CD8-positive, alpha-beta T cell (primary cell): ENCODE measurements at regions of chr5 and their contacts with region 1.

Region 1: GRCh38 chr5:75511435-75512384 is at the starts of genes CERT1 and POLK:
- DNase-seq: peak; percentile 78 to 97 (median 89)
- ATAC-seq: peak; percentile 87
- H3K4me3 ChIP-seq: peak within 1 kb of the TSS; percentile 72 to 79
- H3K4me3 Mint-ChIP-seq: peak within 1 kb of the TSS; percentile 96
- H3K27ac ChIP-seq: peak within 1 kb of the TSS; percentile 74 to 78
- H3K27ac Mint-ChIP-seq: peak within 1 kb of the TSS; percentile 97
- H3K4me1 ChIP-seq: peaks cover 29% of the 10 kb centered on the region
- H3K4me1 Mint-ChIP-seq: peaks cover 64% of the 10 kb centered on the region
- H3K27me3 ChIP-seq: no peaks in the 10 kb centered on the region
- H3K27me3 Mint-ChIP-seq: no peaks in the 10 kb centered on the region
- CTCF ChIP-seq: no peak
- total RNA-seq, gene CERT1: 29.2 to 36.4 TPM
- total RNA-seq, gene POLK: 6.9 to 10.0 TPM

Region 2: GRCh38 chr5:74865804-74866595 is 645.7 kb before region 1 on chr5 and contains the start of gene FAM169A:
- CTCF ChIA-PET with region 1: no interaction called
- POLR2A ChIA-PET with region 1: no interaction called
- intact Hi-C with region 1: loop called in 1 of 2 experiments (anchors 10 kb)
- DNase-seq: peak; percentile 22 to 81 (median 56)
- ATAC-seq: peak; percentile 74
- H3K4me3 ChIP-seq: peak within 1 kb of the TSS; percentile 78 to 86
- H3K4me3 Mint-ChIP-seq: peak within 1 kb of the TSS; percentile 94
- H3K27ac ChIP-seq: peak within 1 kb of the TSS; percentile 58 to 71
- H3K27ac Mint-ChIP-seq: peak within 1 kb of the TSS; percentile 92
- H3K4me1 ChIP-seq: peaks cover 24% of the 10 kb centered on the region
- H3K4me1 Mint-ChIP-seq: peaks cover 40% of the 10 kb centered on the region
- H3K27me3 ChIP-seq: no peaks in the 10 kb centered on the region
- H3K27me3 Mint-ChIP-seq: no peaks in the 10 kb centered on the region
- CTCF ChIP-seq: no peak
- total RNA-seq, gene FAM169A: 21.0 to 21.6 TPM

Region 3: GRCh38 chr5:75681125-75681830 is 169.6 kb after region 1 on chr5:
- CTCF ChIA-PET with region 1: no interaction called
- POLR2A ChIA-PET with region 1: no interaction called
- intact Hi-C with region 1: loop called in 1 of 2 experiments (anchors 10 kb)
- DNase-seq: peak in 2 of 9 experiments; percentile 45 to 61
- ATAC-seq: peak; percentile 49
- H3K4me3 ChIP-seq: no peak overlapping the region
- H3K4me3 Mint-ChIP-seq: no peak overlapping the region
- H3K27ac ChIP-seq: no peak overlapping the region
- H3K27ac Mint-ChIP-seq: no peak overlapping the region
- H3K4me1 ChIP-seq: peaks cover 10% of the 10 kb centered on the region
- H3K4me1 Mint-ChIP-seq: peaks cover 8% of the 10 kb centered on the region
- H3K27me3 ChIP-seq: no peaks in the 10 kb centered on the region
- H3K27me3 Mint-ChIP-seq: no peaks in the 10 kb centered on the region
- CTCF ChIP-seq: peak; percentile 90

Region 4: DNA sequence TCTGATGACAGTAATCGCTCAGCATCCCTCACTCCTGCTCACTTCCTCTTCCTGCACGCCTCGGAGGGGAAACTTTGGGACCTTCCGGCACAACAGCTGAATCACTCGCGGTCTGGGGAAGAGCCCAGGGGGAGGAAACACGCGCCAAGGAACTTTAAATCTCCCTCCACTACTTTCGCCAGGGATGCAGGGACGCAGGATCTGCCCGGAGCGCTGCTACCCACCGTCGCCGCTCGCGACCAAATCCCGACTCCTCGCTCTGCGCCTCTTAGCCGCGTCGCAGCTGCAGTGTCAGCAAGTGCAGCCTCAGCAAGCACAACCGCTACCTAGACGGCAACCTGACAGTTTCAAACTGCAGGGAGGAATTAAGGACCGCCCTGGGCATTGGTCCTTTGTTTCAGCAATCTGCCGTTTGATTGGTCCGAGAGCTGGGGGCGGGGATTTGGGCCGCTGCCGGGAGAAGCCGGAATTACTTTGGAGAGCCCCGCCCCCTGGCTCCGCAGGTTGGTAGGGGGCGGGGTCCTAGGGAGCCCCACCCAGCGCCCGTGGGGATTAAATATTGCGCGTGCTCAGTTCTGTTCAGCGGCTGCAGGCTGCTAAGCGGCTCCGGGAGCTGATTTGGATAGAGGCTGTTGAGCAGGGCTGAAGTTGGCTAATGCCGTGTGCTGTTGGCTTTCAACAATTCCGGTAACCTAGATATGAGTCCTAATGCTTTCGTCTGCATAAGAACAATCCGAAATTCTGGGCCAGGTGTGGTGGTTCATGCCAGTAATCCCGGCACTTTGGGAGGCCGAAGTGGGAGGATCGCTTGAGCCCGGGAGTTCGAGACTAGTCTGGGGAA is 205.6 kb after region 1 on chr5 and contains the start of gene POC5:
- CTCF ChIA-PET with region 1: no interaction called
- POLR2A ChIA-PET with region 1: interaction called, 7 read pairs
- intact Hi-C with region 1: loop called (anchors 1 to 2 kb)
- DNase-seq: peak; percentile 96 to 99 (median 98)
- ATAC-seq: peak; percentile 95
- H3K4me3 ChIP-seq: peak within 1 kb of the TSS; percentile 82 to 93
- H3K4me3 Mint-ChIP-seq: peak within 1 kb of the TSS; percentile 100
- H3K27ac ChIP-seq: peak within 1 kb of the TSS; percentile 69 to 88
- H3K27ac Mint-ChIP-seq: peak within 1 kb of the TSS; percentile 98
- H3K4me1 ChIP-seq: peaks cover 11% of the 10 kb centered on the region
- H3K4me1 Mint-ChIP-seq: peaks cover 39% of the 10 kb centered on the region
- H3K27me3 ChIP-seq: no peaks in the 10 kb centered on the region
- H3K27me3 Mint-ChIP-seq: no peaks in the 10 kb centered on the region
- CTCF ChIP-seq: no peak
- total RNA-seq, gene POC5: 6.5 to 7.9 TPM

Region 5: GRCh38 chr5:76859591-76860247 is 1348.0 kb after region 1 on chr5:
- CTCF ChIA-PET with region 1: no interaction called
- POLR2A ChIA-PET with region 1: no interaction called
- intact Hi-C with region 1: no loop called
- DNase-seq: no peak
- ATAC-seq: no peak
- H3K4me3 ChIP-seq: no peak overlapping the region
- H3K4me3 Mint-ChIP-seq: no peak overlapping the region
- H3K27ac ChIP-seq: no peak overlapping the region
- H3K27ac Mint-ChIP-seq: no peak overlapping the region
- H3K4me1 ChIP-seq: peaks cover 23% of the 10 kb centered on the region
- H3K4me1 Mint-ChIP-seq: peaks cover 22% of the 10 kb centered on the region
- H3K27me3 ChIP-seq: no peaks in the 10 kb centered on the region
- H3K27me3 Mint-ChIP-seq: no peaks in the 10 kb centered on the region
- CTCF ChIP-seq: no peak

Region 6: DNA sequence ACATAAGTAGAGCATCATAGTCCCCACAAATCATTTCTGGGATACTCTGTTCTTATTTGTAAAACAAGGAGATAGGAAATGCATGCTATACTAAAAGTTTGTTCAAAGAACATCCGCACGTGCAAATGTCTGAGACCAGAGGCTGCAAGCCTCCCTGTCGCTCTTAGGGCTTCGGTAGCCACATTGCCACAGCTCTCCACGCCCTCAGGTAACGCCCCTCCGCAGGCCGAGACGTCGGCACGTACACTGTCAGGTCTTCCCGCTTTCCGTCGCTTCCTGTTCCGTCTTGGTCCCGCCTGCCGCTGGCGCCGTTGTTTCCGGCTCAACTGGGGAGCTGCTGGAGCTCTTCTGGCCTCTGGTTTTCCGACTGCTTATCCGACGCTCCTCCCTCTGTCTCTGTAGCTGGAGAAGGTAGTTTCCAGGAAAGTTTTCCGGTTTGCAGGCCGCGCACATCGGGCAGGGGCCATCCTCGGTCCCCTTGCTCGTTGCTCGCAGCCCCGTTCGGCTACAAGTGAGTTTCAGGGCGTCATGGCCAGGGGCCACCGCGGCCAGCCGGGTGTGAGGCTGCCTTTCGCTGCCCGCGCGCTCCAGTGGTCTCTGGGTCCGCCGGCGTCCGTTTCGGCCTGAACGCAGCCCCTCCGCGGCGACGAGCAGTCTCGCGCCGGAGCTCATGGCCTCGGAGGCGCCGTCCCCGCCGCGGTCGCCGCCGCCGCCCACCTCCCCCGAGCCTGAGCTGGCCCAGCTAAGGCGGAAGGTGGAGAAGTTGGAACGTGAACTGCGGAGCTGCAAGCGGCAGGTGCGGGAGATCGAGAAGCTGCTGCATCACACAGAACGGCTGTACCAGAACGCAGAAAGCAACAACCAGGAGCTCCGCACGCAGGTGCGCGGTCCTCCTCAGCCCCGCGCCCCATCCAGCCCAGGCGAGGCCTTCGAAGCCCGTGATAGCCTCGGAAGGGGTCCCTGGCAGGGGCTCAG is 1518.7 kb after region 1 on chr5 and contains the start of gene AGGF1:
- CTCF ChIA-PET with region 1: no interaction called
- POLR2A ChIA-PET with region 1: no interaction called
- intact Hi-C with region 1: loop called in 1 of 2 experiments (anchors 5 kb)
- DNase-seq: peak; percentile 78 to 95 (median 92)
- ATAC-seq: peak; percentile 98
- H3K4me3 ChIP-seq: peak within 1 kb of the TSS; percentile 84 to 94
- H3K4me3 Mint-ChIP-seq: peak within 1 kb of the TSS; percentile 90
- H3K27ac ChIP-seq: peak within 1 kb of the TSS; percentile 69 to 85
- H3K27ac Mint-ChIP-seq: peak within 1 kb of the TSS; percentile 94
- H3K4me1 ChIP-seq: peaks cover 21% of the 10 kb centered on the region
- H3K4me1 Mint-ChIP-seq: peaks cover 43% of the 10 kb centered on the region
- H3K27me3 ChIP-seq: no peaks in the 10 kb centered on the region
- H3K27me3 Mint-ChIP-seq: no peaks in the 10 kb centered on the region
- CTCF ChIP-seq: no peak
- total RNA-seq, gene AGGF1: 14.8 to 14.9 TPM